Vagina (tissue), 2 donors: ENCODE measurements at regions of chr5 and their contacts with region 1.

Region 1: GRCh38 chr5:76601470-76601869 is 21.7 kb downstream of the F2RL2 start:
- DNase-seq: no peak
- H3K4me3 ChIP-seq: no peak overlapping the region
- H3K27ac ChIP-seq: no peak overlapping the region
- H3K4me1 ChIP-seq: no peaks in the 10 kb centered on the region
- H3K27me3 ChIP-seq: no peaks in the 10 kb centered on the region
- CTCF ChIP-seq: peak; percentile 34 to 81 (median 63)
- POLR2A ChIP-seq: no peak

Region 2: GRCh38 chr5:76617675-76618074 is 16.2 kb after region 1 on chr5:
- intact Hi-C with region 1: no loop called
- DNase-seq: no peak
- H3K4me3 ChIP-seq: no peak overlapping the region
- H3K27ac ChIP-seq: no peak overlapping the region
- H3K4me1 ChIP-seq: no peaks in the 10 kb centered on the region
- H3K27me3 ChIP-seq: no peaks in the 10 kb centered on the region
- CTCF ChIP-seq: no peak
- POLR2A ChIP-seq: no peak

Region 3: GRCh38 chr5:76771705-76772405 is 170.4 kb after region 1 on chr5:
- intact Hi-C with region 1: loop called (anchors 5 kb)
- DNase-seq: no peak
- H3K4me3 ChIP-seq: no peak overlapping the region
- H3K27ac ChIP-seq: no peak overlapping the region
- H3K4me1 ChIP-seq: no peaks in the 10 kb centered on the region
- H3K27me3 ChIP-seq: no peaks in the 10 kb centered on the region
- CTCF ChIP-seq: no peak
- POLR2A ChIP-seq: no peak